Ovary (tissue), 10 donors: ENCODE measurements at regions of chr1 and their contacts with region 1.

Region 1: DNA sequence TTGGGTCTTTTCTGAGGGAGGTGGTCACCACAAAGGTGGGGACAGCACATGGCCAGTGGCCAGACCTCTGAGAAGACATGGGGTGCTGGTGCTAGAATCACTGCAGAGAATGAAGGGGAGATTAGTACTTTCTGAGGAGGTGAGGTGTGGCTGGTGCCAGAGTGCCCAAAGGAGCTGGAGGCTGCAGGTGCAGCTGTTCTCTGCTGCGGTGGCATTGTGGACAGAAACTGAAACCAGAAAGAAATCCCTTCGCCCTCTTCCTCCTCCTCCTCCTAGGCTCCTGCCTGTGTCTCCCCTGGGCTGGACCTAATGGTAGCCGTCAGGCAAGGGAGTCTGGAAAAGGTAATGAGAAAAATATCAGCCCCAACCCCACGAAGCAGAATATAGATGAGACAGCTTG is 261.7 kb downstream of the TM2D1 start:
- DNase-seq: no peak
- H3K4me3 ChIP-seq: no peak overlapping the region
- H3K27ac ChIP-seq: no peak overlapping the region
- H3K4me1 ChIP-seq: peaks cover 1% of the 10 kb centered on the region
- H3K27me3 ChIP-seq: no peaks in the 10 kb centered on the region
- CTCF ChIP-seq: no peak
- EP300 ChIP-seq: no peak
- POLR2A ChIP-seq: no peak

Region 2: DNA sequence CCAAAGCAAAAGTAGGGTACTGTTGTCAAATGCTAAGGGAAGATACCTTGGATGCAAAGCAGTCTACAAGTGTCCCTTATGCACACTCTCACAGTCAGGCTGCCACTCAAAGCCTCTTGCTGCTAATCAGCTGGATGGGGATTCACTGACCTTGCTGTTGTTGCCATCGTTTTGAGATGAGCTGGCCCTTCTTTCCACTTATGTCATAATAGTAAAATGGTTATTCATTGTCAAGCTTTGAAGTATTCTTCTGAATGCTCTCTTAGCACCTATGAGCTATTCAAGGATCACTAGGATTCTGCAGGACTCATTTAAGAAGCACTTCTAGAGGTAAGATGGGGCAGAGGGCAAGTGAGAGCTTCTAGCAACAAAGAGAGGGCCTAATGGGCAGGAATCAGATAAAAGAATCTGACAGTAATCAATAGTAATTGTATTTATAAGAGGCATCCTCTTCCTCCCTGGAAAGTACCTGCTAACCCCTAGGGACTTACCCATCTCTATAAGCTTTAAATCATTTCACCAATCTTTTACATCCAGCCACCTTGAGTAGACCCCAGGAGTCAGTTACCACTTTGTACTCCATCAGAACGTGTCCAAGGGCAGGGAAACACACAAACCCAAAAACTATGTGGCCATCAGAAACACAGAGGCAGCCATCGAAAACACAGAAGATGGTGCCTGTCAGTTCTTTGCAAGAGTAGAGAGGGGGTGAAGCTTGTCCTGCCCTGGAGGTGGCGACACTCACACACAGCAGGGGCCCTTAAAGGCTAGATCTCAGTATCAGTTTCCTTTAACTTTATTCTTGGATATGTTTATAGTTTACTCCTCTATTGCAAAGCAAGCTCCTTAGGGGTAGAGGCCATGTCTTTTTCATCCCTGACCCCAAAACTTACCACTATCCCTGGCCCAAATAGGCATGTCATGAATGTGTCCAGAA is 484.5 kb before region 1 on chr1:
- intact Hi-C with region 1: loop called in 3 of 4 experiments (anchors 10 kb)
- DNase-seq: peak in 2 of 5 donors; percentile 34 to 42
- H3K4me3 ChIP-seq: no peak overlapping the region
- H3K27ac ChIP-seq: no peak overlapping the region
- H3K4me1 ChIP-seq: peaks cover 7% of the 10 kb centered on the region
- H3K27me3 ChIP-seq: no peaks in the 10 kb centered on the region
- CTCF ChIP-seq: peak in 1 of 3 donors; percentile 22
- EP300 ChIP-seq: no peak
- POLR2A ChIP-seq: no peak

Region 3: DNA sequence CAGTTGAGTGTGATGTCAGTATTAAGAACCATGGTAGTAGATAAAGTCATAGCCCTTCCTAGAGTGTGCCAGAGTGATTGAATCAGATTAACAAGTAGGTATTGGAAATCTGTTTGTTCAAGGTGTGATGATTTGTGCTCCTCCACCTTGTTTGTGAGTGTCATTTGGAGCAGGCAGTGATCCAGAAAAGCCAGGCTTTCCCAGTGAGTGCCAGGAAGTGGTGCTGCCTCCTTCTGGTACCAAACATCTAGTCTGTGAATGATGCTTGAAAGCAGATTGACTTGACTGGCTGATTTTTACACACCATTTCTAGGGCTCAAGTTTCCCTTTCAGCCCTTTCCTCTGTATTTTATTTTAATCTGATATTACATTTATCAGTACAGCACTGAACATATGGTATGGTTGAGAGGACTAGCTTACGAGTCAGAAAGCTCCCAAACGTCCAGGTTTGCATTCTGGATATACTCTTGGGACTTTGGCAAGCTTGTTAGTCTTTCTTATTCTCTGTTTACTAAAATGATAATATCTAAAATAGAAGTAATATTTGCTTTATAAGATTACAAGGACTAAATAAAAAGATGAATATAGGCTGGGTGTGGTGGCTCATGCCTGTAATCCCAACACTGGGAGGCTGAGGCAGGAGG is 379.8 kb after region 1 on chr1:
- intact Hi-C with region 1: loop called in 1 of 4 experiments (anchors 10 kb)
- DNase-seq: no peak
- H3K4me3 ChIP-seq: no peak overlapping the region
- H3K27ac ChIP-seq: no peak overlapping the region
- H3K4me1 ChIP-seq: no peaks in the 10 kb centered on the region
- H3K27me3 ChIP-seq: no peaks in the 10 kb centered on the region
- CTCF ChIP-seq: no peak
- EP300 ChIP-seq: no peak
- POLR2A ChIP-seq: no peak